ENCODE measurements at regions of chr1 and their contacts with region 1.

Region 1: GRCh38 chr1:20151906-20152598 is 12.9 kb downstream of the PLA2G2F start:
- DNase-seq: peak; percentile 90
- H3K4me3 ChIP-seq: peak overlapping the region; percentile 64
- H3K27ac ChIP-seq: no peak overlapping the region
- H3K4me1 ChIP-seq: peaks cover 5% of the 10 kb centered on the region
- CTCF ChIP-seq: peak; percentile 94

Region 2: GRCh38 chr1:19664453-19665185 is 487.4 kb before region 1 on chr1 and contains the start of gene HTR6:
- CTCF ChIA-PET with region 1: no interaction called
- POLR2A ChIA-PET with region 1: no interaction called
- intact Hi-C with region 1: no loop called
- DNase-seq: no peak
- H3K4me3 ChIP-seq: no peak within 1 kb of the TSS
- H3K27ac ChIP-seq: no peak within 1 kb of the TSS
- H3K4me1 ChIP-seq: no peaks in the 10 kb centered on the region
- CTCF ChIP-seq: no peak
- total RNA-seq, gene HTR6: not detected in 2 replicates

Region 3: GRCh38 chr1:19918057-19918456 is 234.0 kb before region 1 on chr1:
- CTCF ChIA-PET with region 1: interaction called, 4 read pairs
- POLR2A ChIA-PET with region 1: interaction called, 3 read pairs
- intact Hi-C with region 1: loop called (anchors 1 kb)
- DNase-seq: peak; percentile 86
- H3K4me3 ChIP-seq: no peak overlapping the region
- H3K27ac ChIP-seq: no peak overlapping the region
- H3K4me1 ChIP-seq: no peaks in the 10 kb centered on the region
- CTCF ChIP-seq: peak; percentile 96

Region 4: DNA sequence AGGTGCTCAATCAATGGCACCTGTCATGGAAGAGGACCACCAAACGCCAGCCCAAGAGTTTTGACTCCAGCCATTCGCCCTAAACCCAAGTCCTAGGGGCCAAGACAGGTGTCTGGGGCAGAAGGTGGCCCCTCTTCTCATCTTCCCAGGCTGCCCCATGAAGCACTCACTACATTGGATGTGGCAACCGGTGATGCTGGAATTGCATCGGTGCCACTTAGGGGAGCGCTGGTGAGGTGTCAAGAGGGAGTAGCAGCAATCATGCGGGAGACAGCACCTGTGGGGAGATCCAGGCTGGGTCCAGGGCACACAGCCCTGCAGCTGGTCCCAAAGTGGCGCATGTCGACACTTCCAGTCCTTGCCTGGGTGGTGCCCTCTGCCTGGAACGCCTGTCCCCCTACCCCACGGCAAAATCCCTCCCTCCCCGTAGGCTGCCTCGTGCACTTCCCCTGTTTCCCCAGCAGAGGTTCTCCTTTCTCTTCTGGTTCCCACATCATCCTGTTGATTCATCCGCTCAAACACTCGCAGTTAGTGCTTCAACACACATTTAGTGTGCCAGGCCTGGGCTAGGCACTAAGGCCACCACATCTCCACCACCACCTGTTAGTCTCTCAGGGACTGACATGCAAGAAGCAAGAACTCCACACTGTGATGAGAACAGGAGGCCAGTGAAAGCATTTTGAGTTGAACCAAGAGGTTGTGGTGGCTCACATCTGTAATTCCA is 51.3 kb before region 1 on chr1:
- CTCF ChIA-PET with region 1: no interaction called
- POLR2A ChIA-PET with region 1: no interaction called
- intact Hi-C with region 1: loop called (anchors 1 kb)
- DNase-seq: peak; percentile 76
- H3K4me3 ChIP-seq: no peak overlapping the region
- H3K27ac ChIP-seq: no peak overlapping the region
- H3K4me1 ChIP-seq: no peaks in the 10 kb centered on the region
- CTCF ChIP-seq: peak; percentile 87

Region 5: DNA sequence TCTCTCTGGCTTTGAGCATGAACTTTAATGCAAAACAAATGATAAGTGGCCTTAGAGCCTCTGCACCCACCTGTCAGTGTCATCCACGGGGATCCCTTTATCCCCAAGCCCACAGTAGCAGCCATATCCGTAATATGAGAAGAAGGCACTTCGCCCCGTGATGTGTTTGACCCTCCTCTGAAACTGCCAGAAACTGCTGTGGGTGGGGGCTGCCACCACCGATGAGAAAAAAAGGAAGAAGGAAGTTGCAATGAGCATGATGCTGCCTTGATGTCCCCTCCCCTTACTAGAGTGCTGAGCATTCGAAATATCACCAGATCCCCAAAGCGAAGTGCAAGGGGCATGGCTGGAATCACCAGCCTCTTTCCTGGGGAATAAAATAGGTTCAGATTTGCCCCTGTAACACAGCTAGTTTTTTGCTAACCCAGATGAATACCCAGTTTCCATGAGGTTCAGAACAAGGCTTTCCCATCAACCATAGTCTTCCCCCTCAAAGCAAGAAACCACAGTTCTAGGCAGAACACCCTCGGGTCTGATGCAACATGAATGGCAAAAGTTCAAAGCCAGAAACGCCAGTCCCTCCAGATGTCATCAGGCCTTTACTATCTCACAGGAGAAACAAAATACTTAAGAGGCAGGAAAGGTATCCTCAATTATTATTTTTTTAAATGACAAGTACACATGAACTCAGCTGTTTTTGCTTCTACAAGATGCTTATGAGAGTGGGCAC is 23.1 kb after region 1 on chr1:
- CTCF ChIA-PET with region 1: interaction called, 15 read pairs
- POLR2A ChIA-PET with region 1: interaction called, 3 read pairs
- intact Hi-C with region 1: no loop called
- DNase-seq: peak; percentile 39
- H3K4me3 ChIP-seq: peak overlapping the region; percentile 0
- H3K27ac ChIP-seq: no peak overlapping the region
- H3K4me1 ChIP-seq: peaks cover 75% of the 10 kb centered on the region
- CTCF ChIP-seq: no peak